ENCODE measurements at regions of chr1 and their contacts with region 1.

Region 1: DNA sequence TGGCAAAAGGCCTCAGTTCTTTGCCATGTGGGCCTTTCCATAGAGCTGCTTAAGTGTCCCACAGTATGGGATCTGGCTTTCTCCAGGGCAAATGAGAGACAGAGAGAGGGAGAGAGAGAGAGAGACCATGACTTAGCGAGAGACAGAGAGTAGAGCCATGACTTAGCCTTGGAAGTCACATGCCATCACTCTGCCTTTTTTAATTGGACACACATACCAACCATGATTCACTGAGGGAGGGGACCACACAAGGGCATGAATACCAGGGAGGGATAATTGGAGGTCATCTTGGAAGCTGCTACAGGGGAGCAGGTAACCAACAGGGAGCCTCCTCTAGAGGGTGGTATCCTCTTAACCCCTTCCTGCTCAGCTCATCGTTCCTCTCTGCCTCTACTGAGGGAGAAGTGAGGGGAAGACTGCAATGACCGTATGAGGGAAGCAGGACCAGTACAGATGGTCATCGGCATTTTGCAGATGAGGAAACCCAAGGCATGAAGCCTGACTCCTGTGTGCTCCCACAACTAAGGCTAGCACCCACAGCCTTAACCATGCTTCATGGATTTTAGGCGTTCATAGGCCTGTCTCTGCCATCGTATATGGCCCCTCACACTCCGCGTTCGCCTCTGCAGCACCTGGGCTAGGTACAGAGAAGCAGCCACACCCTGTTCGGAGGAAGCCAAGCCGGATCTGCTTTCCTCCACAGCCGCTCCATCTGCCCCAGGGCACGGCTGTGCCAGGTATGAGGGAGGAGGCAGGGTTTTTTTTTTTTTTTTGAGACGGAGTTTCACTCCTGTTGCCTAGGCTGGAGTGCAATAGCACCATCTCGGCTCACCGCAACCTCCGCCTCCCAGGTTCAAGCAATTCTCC is 38.6 kb downstream of the MEF2D start:
- DNase-seq: peak; percentile 77
- ATAC-seq: peak; percentile 65
- H3K4me3 ChIP-seq: no peak overlapping the region
- H3K4me1 ChIP-seq: peaks cover 34% of the 10 kb centered on the region
- CTCF ChIP-seq: no peak

Region 2: GRCh38 chr1:156338180-156338973 is 123.6 kb before region 1 on chr1 and contains the starts of genes CCT3 and TSACC:
- intact Hi-C with region 1: no loop called
- DNase-seq: peak; percentile 99
- ATAC-seq: peak; percentile 97
- H3K4me3 ChIP-seq: peak within 1 kb of the TSS; percentile 63
- H3K4me1 ChIP-seq: peaks cover 17% of the 10 kb centered on the region
- CTCF ChIP-seq: no peak
- total RNA-seq, gene CCT3: 117 to 157 (median 133) TPM
- total RNA-seq, gene TSACC: 0.87 TPM in 1 of 3 donors, not detected in the others

Region 3: GRCh38 chr1:156394835-156395461 is 67.1 kb before region 1 on chr1:
- intact Hi-C with region 1: no loop called
- DNase-seq: no peak
- ATAC-seq: no peak
- H3K4me3 ChIP-seq: no peak overlapping the region
- H3K4me1 ChIP-seq: no peaks in the 10 kb centered on the region
- CTCF ChIP-seq: no peak

Region 4: GRCh38 chr1:156499842-156500546 is 38.0 kb after region 1 on chr1:
- intact Hi-C with region 1: loop called in 1 of 2 experiments (anchors 5 kb)
- DNase-seq: peak; percentile 72 to 81 (median 76)
- ATAC-seq: no peak
- H3K4me3 ChIP-seq: peak overlapping the region; percentile 94
- H3K4me1 ChIP-seq: peaks cover 64% of the 10 kb centered on the region
- CTCF ChIP-seq: no peak

Region 5: GRCh38 chr1:156524481-156524869 is 62.5 kb after region 1 on chr1:
- intact Hi-C with region 1: no loop called
- DNase-seq: no peak
- ATAC-seq: peak; percentile 39
- H3K4me3 ChIP-seq: no peak overlapping the region
- H3K4me1 ChIP-seq: no peaks in the 10 kb centered on the region
- CTCF ChIP-seq: no peak